ENCODE measurements at regions of chr20 and their contacts with region 1.

Region 1: GRCh38 chr20:7346562-7346961 is 579.1 kb downstream of the BMP2 start:
- DNase-seq: peak; percentile 96
- H3K4me3 ChIP-seq: no peak overlapping the region
- H3K27ac ChIP-seq: peak overlapping the region; percentile 99
- H3K4me1 ChIP-seq: peaks cover 29% of the 10 kb centered on the region
- H3K27me3 ChIP-seq: no peaks in the 10 kb centered on the region
- CTCF ChIP-seq: no peak

Region 2: DNA sequence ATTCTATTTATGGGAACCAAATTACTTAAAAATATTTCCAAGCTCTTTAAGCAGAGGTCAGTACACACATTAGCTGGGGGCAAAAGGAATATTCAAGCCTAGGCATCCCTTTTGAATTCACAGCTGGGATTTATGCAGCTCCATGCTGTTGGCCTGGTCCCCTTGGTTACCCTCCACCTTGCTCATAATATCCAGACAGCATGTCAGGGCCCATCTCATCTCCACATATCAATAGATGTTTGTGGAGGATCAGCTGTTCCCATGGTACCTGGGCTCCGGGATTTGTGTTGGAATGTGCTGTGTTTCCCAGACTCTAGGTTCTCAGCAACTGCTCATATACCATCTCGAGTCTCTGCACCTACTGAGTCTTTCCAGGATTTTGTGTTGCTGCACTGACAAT is 44.3 kb before region 1 on chr20:
- CTCF ChIA-PET with region 1: no interaction called
- dilution Hi-C with region 1: no loop called
- in situ Hi-C with region 1: no loop called
- intact Hi-C with region 1: loop called (anchors 2 kb)
- DNase-seq: peak; percentile 57
- H3K4me3 ChIP-seq: no peak overlapping the region
- H3K27ac ChIP-seq: peak overlapping the region; percentile 42
- H3K4me1 ChIP-seq: peaks cover 7% of the 10 kb centered on the region
- H3K27me3 ChIP-seq: no peaks in the 10 kb centered on the region
- CTCF ChIP-seq: no peak